ENCODE measurements at regions of chr7 and their contacts with region 1.

Region 1: GRCh38 chr7:106542550-106543220 is 118.3 kb downstream of the CCDC71L start:
- DNase-seq: peak; percentile 64
- CTCF ChIP-seq: peak; percentile 41

Region 2: GRCh38 chr7:106493041-106493731 is 49.5 kb before region 1 on chr7:
- CTCF ChIA-PET with region 1: no interaction called
- POLR2A ChIA-PET with region 1: no interaction called
- DNase-seq: no peak
- CTCF ChIP-seq: no peak

Region 3: GRCh38 chr7:106552645-106553445 is 10.2 kb after region 1 on chr7:
- CTCF ChIA-PET with region 1: interaction called, 24 read pairs
- POLR2A ChIA-PET with region 1: no interaction called
- DNase-seq: peak; percentile 75
- CTCF ChIP-seq: no peak

Region 4: DNA sequence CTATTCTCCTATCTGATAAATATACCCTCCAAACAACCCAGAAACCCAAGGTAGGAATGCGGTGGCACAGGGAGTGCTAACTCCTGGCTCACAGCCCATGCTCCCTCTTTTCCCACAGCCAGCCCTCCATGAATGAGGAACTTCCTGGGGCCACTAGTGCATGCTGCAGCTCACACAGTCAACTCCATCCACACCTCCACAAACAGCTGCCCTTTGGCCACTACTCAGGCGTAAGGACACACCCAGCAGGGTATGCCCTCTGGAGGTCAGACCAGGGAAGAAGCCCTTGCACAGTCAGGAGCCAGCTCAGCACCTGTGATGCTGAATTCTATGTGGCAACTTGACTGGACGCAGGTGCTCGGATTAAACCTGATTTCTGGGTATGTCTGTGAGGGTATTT is 237.2 kb after region 1 on chr7:
- CTCF ChIA-PET with region 1: interaction called, 10 read pairs
- POLR2A ChIA-PET with region 1: no interaction called
- DNase-seq: no peak
- CTCF ChIP-seq: no peak